Activated CD4-positive, alpha-beta T cell treated with anti-CD3 and anti-CD28 coated beads, Interleukin-2, amount 10 ng/mL, durations not matched to agents 24 days and 14 days (primary cell): ENCODE measurements at regions of chr19 and their contacts with region 1.

Region 1: DNA sequence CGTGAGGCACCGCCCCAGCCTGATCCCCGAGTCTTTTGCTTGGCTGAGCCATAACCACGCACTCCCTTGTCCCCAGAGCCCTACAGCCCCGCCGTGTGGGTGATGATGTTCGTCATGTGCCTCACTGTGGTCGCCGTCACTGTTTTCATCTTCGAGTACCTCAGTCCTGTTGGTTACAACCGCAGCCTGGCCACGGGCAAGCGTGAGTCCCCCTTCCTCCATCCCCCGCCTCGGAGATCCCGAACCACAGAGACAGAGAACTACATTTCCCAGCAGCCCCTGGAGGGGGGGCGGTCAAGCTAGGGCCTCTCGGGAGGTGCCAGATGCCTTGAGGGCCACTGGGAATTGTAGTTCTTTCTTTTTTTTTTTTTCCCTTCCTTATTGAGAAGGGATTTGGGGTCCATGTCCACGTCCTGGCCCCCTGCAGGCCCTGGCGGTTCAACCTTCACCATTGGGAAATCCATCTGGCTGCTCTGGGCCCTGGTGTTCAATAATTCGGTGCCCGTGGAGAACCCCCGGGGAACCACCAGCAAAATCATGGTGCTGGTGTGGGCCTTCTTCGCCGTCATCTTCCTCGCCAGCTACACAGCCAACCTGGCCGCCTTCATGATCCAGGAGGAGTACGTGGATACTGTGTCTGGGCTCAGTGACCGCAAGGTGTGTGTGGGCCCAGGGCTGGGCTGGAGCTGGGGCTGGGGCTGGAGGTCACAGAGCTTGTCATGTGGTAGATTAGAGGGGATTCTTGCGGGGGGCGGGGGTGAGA is 25.9 kb downstream of the GRIN2D start:
- DNase-seq: peak; percentile 92
- H3K4me3 Mint-ChIP-seq: peak overlapping the region; percentile 59
- H3K27ac Mint-ChIP-seq: peak overlapping the region; percentile 83
- H3K4me1 Mint-ChIP-seq: peaks cover 24% of the 10 kb centered on the region
- H3K27me3 Mint-ChIP-seq: peaks cover 13% of the 10 kb centered on the region

Region 2: DNA sequence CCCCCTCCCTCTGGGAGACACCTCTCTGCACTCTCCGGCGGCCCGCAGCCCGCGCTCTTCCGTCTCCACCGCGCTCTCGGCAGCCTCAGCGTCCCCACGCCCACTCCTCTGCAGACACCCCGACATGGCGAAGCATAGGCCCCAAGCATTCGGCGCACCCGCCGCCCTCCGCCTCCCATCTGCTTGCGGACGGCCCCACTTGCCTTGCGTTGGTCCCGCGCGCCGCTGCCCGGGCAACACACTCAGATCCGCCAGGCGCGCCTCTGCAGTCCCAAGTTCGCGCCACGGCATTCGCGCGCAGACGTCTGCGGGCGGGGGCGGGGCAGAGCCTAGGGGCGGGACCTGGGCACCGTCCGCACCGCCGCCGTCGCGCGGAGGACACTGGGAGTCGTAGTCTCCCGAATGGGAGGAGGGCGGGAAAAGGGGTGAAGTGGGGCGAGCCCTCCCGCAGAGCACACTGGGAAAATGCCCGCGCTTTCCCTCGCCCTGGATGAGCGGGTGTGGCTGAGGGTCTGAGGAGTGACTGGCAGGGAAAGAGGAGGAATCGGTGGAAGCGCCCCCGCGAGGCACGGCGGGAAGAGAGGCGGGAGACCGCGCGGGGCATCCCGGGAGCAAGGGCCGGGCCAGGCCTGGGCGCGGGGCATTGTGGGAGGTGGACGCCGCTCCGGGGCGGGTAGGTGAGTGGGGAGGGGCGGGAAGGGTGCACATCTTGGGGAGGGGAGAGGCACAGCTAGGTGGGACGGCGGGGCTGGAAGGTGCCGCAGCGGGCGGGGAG is 249.1 kb before region 1 on chr19 and contains the starts of genes LIG1 and ZSWIM9:
- intact Hi-C with region 1: no loop called
- DNase-seq: peak; percentile 97
- H3K4me3 Mint-ChIP-seq: peak within 1 kb of the TSS; percentile 98
- H3K27ac Mint-ChIP-seq: peak within 1 kb of the TSS; percentile 96
- H3K4me1 Mint-ChIP-seq: peaks cover 34% of the 10 kb centered on the region
- H3K27me3 Mint-ChIP-seq: no peaks in the 10 kb centered on the region
- total RNA-seq, gene LIG1: 138 and 144 TPM in 2 replicates
- total RNA-seq, gene ZSWIM9: 8.0 and 9.9 TPM in 2 replicates

Region 3: DNA sequence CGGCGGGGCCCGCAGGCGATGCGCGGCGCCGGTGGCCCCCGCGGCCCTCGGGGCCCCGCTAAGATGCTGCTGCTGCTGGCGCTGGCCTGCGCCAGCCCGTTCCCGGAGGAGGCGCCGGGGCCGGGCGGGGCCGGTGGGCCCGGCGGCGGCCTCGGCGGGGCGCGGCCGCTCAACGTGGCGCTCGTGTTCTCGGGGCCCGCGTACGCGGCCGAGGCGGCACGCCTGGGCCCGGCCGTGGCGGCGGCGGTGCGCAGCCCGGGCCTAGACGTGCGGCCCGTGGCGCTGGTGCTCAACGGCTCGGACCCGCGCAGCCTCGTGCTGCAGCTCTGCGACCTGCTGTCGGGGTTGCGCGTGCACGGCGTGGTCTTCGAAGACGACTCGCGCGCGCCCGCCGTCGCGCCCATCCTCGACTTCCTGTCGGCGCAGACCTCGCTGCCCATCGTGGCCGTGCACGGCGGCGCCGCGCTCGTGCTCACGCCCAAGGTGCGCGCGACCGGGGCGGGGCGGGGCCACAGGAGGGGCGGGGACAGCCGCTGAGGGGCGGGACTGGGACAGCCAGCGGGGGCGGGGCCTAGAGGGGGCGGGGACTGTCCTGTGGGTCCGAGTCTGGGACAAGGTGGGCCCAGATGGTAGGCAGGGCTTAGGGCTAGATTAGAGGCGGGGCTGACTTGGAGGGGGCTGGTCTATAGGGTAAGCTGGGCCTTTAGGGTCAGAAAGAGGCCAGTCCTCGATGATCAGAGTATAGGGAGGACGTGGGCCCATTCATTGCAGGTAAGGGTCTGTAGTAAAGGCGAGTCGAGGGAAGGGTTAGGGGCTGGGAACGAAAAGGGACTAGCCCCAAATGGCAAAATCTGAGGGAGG is 20.7 kb before region 1 on chr19:
- intact Hi-C with region 1: loop called (anchors 1 kb)
- DNase-seq: peak; percentile 96
- H3K4me3 Mint-ChIP-seq: peak overlapping the region; percentile 94
- H3K27ac Mint-ChIP-seq: peak overlapping the region; percentile 64
- H3K4me1 Mint-ChIP-seq: peaks cover 36% of the 10 kb centered on the region
- H3K27me3 Mint-ChIP-seq: peaks cover 35% of the 10 kb centered on the region

Region 4: DNA sequence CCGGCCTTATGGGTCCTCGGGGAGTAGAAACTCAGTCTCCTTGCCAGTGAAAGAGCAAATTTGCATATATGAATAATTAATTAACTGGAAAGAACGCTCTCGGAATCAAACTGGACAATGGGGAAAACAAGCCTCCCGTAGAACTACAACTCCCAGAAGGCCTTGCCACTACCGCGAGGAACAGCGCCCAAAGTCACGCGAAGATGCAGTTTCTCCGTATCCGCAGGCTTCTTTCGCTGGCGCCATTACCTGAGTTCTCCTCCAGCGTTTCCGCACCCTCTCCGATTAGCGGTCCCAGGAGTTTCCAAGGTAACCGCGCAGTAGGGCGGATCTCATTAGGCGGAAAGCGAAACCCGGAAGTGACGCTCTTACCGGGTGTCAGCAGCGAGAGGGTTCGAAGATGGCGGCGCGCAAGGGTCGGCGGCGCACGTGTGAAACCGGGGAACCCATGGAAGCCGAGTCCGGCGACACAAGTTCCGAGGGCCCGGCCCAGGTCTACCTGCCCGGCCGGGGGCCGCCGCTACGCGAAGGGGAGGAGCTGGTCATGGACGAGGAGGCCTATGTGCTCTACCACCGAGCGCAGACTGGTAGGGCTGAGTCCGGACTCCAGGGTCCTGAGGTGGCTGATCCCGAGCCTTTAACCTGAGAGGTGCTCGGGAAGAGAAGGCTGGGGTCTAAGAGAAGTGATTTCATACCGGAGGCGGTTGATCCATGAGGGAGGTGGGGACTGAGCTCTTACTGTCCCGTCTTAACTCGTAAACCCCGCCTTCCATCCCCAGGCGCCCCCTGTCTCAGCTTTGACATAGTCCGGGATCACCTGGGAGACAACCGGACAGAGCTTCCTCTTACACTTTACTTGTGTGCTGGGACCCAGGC is 26.5 kb after region 1 on chr19 and contains the start of gene GRWD1:
- intact Hi-C with region 1: loop called (anchors 2 kb)
- DNase-seq: peak; percentile 98
- H3K4me3 Mint-ChIP-seq: peak within 1 kb of the TSS; percentile 96
- H3K27ac Mint-ChIP-seq: peak within 1 kb of the TSS; percentile 97
- H3K4me1 Mint-ChIP-seq: peaks cover 23% of the 10 kb centered on the region
- H3K27me3 Mint-ChIP-seq: peaks cover 25% of the 10 kb centered on the region
- total RNA-seq, gene GRWD1: 89.1 and 90.6 TPM in 2 replicates